ENCODE measurements at regions of chr20 and their contacts with region 1.

Region 1: GRCh38 chr20:57048027-57048869 is 218.2 kb downstream of the BMP7 start:
- DNase-seq: peak; percentile 69
- H3K4me3 Mint-ChIP-seq: no peak overlapping the region
- H3K27ac Mint-ChIP-seq: no peak overlapping the region
- H3K4me1 Mint-ChIP-seq: no peaks in the 10 kb centered on the region
- H3K27me3 Mint-ChIP-seq: no peaks in the 10 kb centered on the region

Region 2: DNA sequence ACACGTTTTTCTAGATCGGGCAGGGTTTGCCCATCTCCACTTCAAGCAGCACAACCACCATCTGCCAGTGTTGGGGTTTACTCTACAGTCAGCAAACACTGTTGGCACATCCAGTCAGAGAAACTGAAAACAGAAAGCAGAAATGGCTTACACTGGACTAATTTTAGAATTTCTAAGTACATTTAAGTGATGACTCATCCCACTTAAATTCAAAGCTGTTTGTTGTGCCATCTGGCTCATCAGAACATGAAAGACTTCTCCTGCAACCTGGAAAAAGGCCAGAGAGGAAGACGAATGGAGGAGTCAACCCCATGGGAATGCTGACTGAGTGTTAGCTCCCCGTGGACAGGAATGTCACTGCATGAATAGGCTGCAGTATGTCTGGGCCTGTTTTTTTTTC is 493.4 kb before region 1 on chr20:
- intact Hi-C with region 1: loop called (anchors 2 kb)
- DNase-seq: peak; percentile 57
- H3K4me3 Mint-ChIP-seq: no peak overlapping the region
- H3K27ac Mint-ChIP-seq: peak overlapping the region; percentile 45
- H3K4me1 Mint-ChIP-seq: peaks cover 8% of the 10 kb centered on the region
- H3K27me3 Mint-ChIP-seq: peaks cover 3% of the 10 kb centered on the region

Region 3: GRCh38 chr20:56566271-56566981 is 481.8 kb before region 1 on chr20:
- intact Hi-C with region 1: no loop called
- DNase-seq: no peak
- H3K4me3 Mint-ChIP-seq: no peak overlapping the region
- H3K27ac Mint-ChIP-seq: no peak overlapping the region
- H3K4me1 Mint-ChIP-seq: no peaks in the 10 kb centered on the region
- H3K27me3 Mint-ChIP-seq: no peaks in the 10 kb centered on the region

Region 4: GRCh38 chr20:57374931-57375651 is 326.8 kb after region 1 on chr20:
- intact Hi-C with region 1: no loop called
- DNase-seq: no peak
- H3K4me3 Mint-ChIP-seq: no peak overlapping the region
- H3K27ac Mint-ChIP-seq: peak overlapping the region; percentile 24
- H3K4me1 Mint-ChIP-seq: peaks cover 6% of the 10 kb centered on the region
- H3K27me3 Mint-ChIP-seq: no peaks in the 10 kb centered on the region

Measured in activated CD4-positive, alpha-beta T cell treated with anti-CD3 and anti-CD28 coated beads, Interleukin-2, amount 10 ng/mL, durations not matched to agents 24 days and 14 days (primary cell).